Head of caudate nucleus (tissue), 42 donors: ENCODE measurements at regions of chr11 and their contacts with region 1.

Region 1: DNA sequence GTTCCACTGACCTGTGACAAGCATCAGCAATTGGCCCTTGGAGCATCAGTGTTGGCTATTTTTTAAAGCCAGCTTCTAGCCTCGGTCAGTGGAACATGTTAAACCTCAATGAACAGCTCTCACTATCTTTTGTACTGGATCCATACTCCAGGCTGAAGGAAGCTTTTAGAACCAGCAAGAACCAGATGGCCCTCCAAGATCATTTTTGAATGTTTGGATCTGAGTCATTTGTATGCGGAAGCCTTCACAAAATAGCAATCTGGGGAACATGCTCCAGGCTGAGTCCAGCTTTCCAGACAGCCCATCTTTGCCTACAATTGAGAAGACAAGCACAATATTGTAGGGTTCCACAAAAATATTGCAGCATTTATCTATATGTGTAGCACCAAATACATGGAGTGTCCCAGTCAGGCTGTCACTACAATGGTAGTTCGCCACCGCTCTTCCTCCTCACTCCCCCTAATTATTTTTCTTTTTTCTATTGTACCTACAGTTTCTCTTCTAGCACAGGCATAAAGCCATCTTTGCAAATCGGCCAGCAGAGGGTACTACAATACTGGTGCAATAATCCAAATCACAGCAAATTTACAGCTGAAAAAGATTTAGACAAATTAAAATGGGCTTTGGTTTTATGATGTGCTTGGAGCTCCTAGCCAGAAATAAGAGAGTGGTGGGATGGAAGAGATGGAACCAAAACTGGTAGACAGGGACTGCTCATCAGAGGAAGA is 177.4 kb upstream of the BLID start:
- DNase-seq: peak in 18 of 42 donors; percentile 22 to 75 (median 36)

Region 2: GRCh38 chr11:122229481-122230384 is 63.7 kb before region 1 on chr11:
- intact Hi-C with region 1: loop called (anchors 5 kb)
- DNase-seq: peak in 38 of 42 donors; percentile 13 to 77 (median 57)

Region 3: GRCh38 chr11:122439911-122440810 is 146.7 kb after region 1 on chr11:
- intact Hi-C with region 1: loop called (anchors 10 kb)
- DNase-seq: peak in 36 of 42 donors; percentile 8 to 74 (median 44)

Region 4: GRCh38 chr11:122505304-122506006 is 212.0 kb after region 1 on chr11:
- intact Hi-C with region 1: loop called (anchors 5 kb)
- DNase-seq: peak; percentile 70 to 96 (median 89)